CD4-positive, alpha-beta memory T cell (primary cell): ENCODE measurements at regions of chr17 and their contacts with region 1.

Region 1: DNA sequence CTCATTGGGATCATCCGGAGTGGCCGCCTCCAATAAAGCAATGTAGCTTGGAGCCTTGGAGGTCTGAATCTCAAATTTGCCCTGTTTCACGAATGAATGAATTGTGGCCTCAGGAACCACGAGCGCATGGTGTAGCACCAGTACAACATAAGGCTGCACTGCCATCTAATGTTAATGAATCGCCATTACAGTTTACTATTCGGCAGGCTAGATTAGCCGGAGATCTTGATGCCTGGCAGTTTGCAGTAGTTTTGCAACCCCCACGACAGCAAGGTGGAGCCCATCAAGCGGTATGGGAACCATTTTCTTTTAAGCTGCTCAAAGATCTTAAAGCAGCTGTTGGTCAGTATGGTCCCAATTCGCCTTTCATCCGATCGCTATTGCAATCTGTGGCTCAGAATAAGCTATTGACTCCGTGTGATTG is 18.8 kb downstream of the ALOX15B start:
- DNase-seq: peak; percentile 63 to 74 (median 69)
- H3K4me3 ChIP-seq: no peak overlapping the region
- H3K4me3 Mint-ChIP-seq: no peak overlapping the region
- H3K27ac ChIP-seq: no peak overlapping the region
- H3K27ac Mint-ChIP-seq: no peak overlapping the region
- H3K4me1 ChIP-seq: peaks cover 7% of the 10 kb centered on the region
- H3K4me1 Mint-ChIP-seq: peaks cover 1 to 16% (median 3%) of the 10 kb centered on the region in 4 donors
- H3K27me3 ChIP-seq: peaks cover 27% of the 10 kb centered on the region
- H3K27me3 Mint-ChIP-seq: peaks cover 31 to 32% of the 10 kb centered on the region in 2 donors

Region 2: GRCh38 chr17:7818746-7819645 is 238.7 kb before region 1 on chr17:
- CTCF ChIA-PET with region 1: interaction called, 4 read pairs
- POLR2A ChIA-PET with region 1: no interaction called
- intact Hi-C with region 1: loop called (anchors 1 kb)
- DNase-seq: no peak
- H3K4me3 ChIP-seq: no peak overlapping the region
- H3K4me3 Mint-ChIP-seq: no peak overlapping the region
- H3K27ac ChIP-seq: no peak overlapping the region
- H3K27ac Mint-ChIP-seq: no peak overlapping the region
- H3K4me1 ChIP-seq: no peaks in the 10 kb centered on the region
- H3K4me1 Mint-ChIP-seq: no peaks in the 10 kb centered on the region
- H3K27me3 ChIP-seq: no peaks in the 10 kb centered on the region
- H3K27me3 Mint-ChIP-seq: no peaks in the 10 kb centered on the region

Region 3: DNA sequence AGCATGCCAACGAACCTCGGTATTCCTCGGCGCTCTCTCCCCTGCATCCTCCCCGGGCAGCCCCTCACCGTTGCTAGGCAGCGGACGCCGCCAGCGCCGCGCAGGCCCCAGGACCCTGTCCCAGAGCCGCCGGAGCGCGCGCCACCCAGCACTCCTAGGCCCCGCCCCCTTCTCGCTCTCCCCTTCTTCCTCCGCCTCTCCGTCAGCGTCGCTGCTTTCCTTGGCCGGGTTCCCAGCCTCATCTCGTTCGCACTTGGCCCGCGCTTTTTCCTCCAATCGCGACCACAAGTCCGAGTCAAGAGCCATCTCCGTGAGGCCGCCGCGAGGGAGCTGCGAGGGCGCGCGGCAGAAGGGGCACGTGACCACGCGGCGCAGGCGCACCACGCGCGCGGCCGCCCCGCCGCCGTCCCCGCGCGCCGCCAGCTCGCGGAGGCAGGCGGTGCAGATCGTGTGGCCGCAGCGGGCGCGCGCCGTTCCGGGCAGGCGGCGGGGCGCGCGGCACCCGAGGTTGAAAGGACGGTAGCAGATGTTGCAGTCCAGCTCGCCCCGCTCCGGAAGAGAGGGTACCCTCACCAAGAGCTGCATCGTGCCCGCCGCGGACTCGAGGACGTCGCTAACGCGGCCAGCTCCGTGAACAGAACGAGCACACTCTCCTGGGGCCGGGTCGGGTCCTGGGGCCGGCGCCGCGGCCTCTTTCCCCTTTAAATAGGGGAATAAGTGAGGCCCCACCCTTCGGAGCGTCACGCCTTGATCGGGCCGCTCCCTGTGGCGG is 141.9 kb before region 1 on chr17 and contains the start of gene RNF227:
- CTCF ChIA-PET with region 1: interaction called, 14 read pairs
- POLR2A ChIA-PET with region 1: interaction called, 3 read pairs
- intact Hi-C with region 1: loop called (anchors 1 kb)
- DNase-seq: peak; percentile 84 to 88 (median 84)
- H3K4me3 ChIP-seq: peak within 1 kb of the TSS; percentile 33 to 71
- H3K4me3 Mint-ChIP-seq: peak within 1 kb of the TSS; percentile 88 to 95 (median 90)
- H3K27ac ChIP-seq: peak within 1 kb of the TSS; percentile 67
- H3K27ac Mint-ChIP-seq: peak within 1 kb of the TSS; percentile 91 to 95 (median 93)
- H3K4me1 ChIP-seq: peaks cover 26% of the 10 kb centered on the region
- H3K4me1 Mint-ChIP-seq: peaks cover 19 to 34% (median 24%) of the 10 kb centered on the region in 4 donors
- H3K27me3 ChIP-seq: no peaks in the 10 kb centered on the region
- H3K27me3 Mint-ChIP-seq: no peaks in the 10 kb centered on the region
- total RNA-seq, gene RNF227: 6.7 to 7.4 TPM

Region 4: DNA sequence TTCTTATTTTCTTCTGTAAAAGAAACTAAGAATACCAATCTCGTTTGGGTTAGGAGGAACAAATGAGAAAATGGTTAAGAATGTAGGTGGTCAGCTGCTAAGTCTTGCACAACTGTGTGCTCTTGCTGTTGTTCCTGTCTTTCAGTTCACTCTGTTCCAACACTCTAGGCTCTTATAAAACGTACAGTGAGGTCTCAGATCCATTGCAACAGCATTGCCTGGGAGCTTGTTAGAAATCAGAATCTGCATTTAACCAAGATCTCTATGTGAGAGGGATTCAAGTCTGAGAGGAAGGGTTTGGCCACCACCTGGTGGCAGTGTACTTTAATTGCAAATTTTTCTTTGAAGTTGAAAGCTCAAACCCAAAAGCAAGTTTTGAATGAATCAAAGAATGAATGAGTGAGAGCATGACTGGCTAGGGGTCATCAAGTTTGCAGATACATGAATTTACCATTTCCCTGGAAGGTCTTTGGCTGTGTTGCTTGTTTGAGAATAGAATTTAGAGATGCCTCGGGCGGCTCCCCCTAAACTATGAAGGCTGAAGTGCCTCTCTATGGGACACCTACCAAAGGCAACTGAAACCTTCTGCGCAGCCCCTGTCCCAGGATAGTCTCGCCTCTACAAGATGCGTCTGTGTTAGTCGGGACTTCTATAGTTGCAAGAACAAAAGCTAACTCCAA is 16.3 kb before region 1 on chr17:
- CTCF ChIA-PET with region 1: interaction called, 17 read pairs
- POLR2A ChIA-PET with region 1: no interaction called
- intact Hi-C with region 1: loop called (anchors 1 kb)
- DNase-seq: peak; percentile 29 to 49 (median 35)
- H3K4me3 ChIP-seq: no peak overlapping the region
- H3K4me3 Mint-ChIP-seq: no peak overlapping the region
- H3K27ac ChIP-seq: no peak overlapping the region
- H3K27ac Mint-ChIP-seq: no peak overlapping the region
- H3K4me1 ChIP-seq: no peaks in the 10 kb centered on the region
- H3K4me1 Mint-ChIP-seq: peaks cover 0 to 4% (median 0%) of the 10 kb centered on the region in 4 donors
- H3K27me3 ChIP-seq: no peaks in the 10 kb centered on the region
- H3K27me3 Mint-ChIP-seq: peaks cover 15 to 16% of the 10 kb centered on the region in 2 donors

Region 5: GRCh38 chr17:8079291-8080207 is 21.8 kb after region 1 on chr17:
- CTCF ChIA-PET with region 1: interaction called, 147 read pairs
- POLR2A ChIA-PET with region 1: no interaction called
- intact Hi-C with region 1: loop called (anchors 1 kb)
- DNase-seq: peak; percentile 76 to 84 (median 77)
- H3K4me3 ChIP-seq: peak overlapping the region in 1 of 2 donors; percentile 70
- H3K4me3 Mint-ChIP-seq: peak overlapping the region; percentile 86 to 93 (median 89)
- H3K27ac ChIP-seq: peak overlapping the region; percentile 63
- H3K27ac Mint-ChIP-seq: peak overlapping the region; percentile 46 to 95 (median 86)
- H3K4me1 ChIP-seq: peaks cover 14% of the 10 kb centered on the region
- H3K4me1 Mint-ChIP-seq: peaks cover 7 to 16% (median 12%) of the 10 kb centered on the region in 4 donors
- H3K27me3 ChIP-seq: peaks cover 3% of the 10 kb centered on the region
- H3K27me3 Mint-ChIP-seq: peaks cover 0 to 6% of the 10 kb centered on the region in 2 donors

Region 6: DNA sequence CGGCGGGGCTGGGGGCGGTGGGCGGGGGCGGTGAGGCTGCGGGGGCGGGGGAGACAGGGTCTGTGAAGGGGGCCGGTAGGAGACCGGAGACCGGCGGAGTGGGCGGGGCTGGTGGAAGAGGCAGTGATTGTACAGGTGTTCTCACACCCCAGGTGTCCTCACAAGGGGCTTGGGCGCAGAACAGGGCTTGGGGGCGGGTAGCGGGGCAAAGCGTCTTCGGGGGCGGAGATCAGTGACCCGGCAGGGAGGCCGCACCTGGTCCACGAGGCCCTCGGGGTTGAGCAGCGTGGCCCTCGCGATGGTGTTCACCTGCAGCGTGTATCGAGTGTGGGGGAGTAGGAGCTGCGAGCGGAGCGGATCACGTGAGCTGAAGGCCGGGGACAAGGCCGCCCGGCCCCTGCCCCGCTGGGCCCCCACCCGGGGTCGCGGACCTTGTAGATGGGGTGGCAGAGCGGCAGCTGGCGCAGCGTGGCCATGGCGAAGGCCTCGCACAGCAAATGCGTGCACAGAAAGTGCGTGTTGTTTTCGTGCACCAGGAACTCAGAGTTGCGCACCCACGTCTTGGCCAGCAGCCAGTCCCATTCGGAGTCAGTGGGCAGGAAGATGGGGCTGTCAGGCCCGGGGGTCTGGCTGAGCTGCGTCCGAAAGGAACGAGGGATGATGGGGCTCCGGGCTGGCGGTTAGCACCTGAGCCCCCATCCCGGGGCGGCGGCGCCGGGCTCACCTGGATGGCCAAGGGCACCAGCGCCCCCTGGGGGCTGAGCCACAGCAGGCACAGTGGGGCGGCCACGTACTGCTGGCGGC is 52.2 kb after region 1 on chr17:
- CTCF ChIA-PET with region 1: interaction called, 83 read pairs
- POLR2A ChIA-PET with region 1: interaction called, 3 read pairs
- intact Hi-C with region 1: loop called (anchors 1 kb)
- DNase-seq: peak; percentile 78 to 86 (median 82)
- H3K4me3 ChIP-seq: peak overlapping the region; percentile 66 to 84
- H3K4me3 Mint-ChIP-seq: peak overlapping the region; percentile 42 to 78 (median 72)
- H3K27ac ChIP-seq: no peak overlapping the region
- H3K27ac Mint-ChIP-seq: no peak overlapping the region
- H3K4me1 ChIP-seq: peaks cover 5% of the 10 kb centered on the region
- H3K4me1 Mint-ChIP-seq: peaks cover 0 to 5% (median 2%) of the 10 kb centered on the region in 4 donors
- H3K27me3 ChIP-seq: peaks cover 26% of the 10 kb centered on the region
- H3K27me3 Mint-ChIP-seq: peaks cover 15 to 22% of the 10 kb centered on the region in 2 donors

Region 7: DNA sequence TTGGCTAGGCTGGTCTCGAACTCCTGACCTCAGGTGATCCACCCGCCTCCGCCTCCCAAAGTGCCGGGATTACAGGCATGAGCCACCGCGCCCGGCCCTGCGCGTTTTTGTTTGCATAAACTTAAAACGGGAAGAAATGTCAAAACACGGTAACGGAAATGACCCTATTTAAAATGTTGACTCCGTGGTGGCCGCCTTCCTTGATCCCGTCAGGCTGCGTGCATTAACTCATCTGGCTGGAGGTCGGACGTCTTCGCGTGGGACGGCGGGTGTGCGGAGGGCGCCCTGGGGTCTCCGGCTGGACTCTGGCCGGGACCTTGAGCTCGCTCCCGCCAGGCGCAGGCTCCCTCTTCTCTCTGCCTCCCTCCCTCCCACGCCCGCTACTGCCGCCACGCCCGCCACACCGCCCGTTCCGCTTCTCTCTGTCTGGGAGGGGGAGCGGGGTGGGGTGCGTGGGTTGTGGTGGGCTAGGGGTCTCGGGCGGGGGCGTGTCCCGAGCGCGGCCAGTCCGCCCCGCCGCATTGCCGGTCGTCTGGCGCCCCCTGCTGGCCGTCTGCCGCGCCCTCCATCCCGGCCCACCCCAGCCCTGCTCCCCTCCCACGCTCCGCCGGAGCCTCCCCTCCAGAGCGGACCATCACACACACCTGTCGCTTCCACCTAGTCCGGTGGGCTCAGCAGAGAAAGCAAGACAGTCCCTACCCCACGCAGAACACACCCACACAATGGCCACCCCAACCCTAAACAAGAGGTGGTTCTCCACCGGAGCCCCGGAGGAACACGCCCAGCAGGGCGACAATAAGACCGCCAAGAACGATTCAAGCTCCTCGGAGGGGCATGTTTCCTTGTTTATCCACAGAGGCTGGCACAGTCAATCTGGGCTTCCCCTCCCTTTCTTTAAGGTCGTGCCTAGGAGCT is 688.1 kb after region 1 on chr17:
- CTCF ChIA-PET with region 1: interaction called, 14 read pairs
- POLR2A ChIA-PET with region 1: no interaction called
- intact Hi-C with region 1: loop called (anchors 5 kb)
- DNase-seq: peak; percentile 66 to 78 (median 70)
- H3K4me3 ChIP-seq: peak overlapping the region; percentile 34 to 72
- H3K4me3 Mint-ChIP-seq: peak overlapping the region; percentile 89 to 95 (median 91)
- H3K27ac ChIP-seq: peak overlapping the region; percentile 56
- H3K27ac Mint-ChIP-seq: peak overlapping the region; percentile 87 to 95 (median 91)
- H3K4me1 ChIP-seq: peaks cover 17% of the 10 kb centered on the region
- H3K4me1 Mint-ChIP-seq: peaks cover 9 to 23% (median 12%) of the 10 kb centered on the region in 4 donors
- H3K27me3 ChIP-seq: no peaks in the 10 kb centered on the region
- H3K27me3 Mint-ChIP-seq: no peaks in the 10 kb centered on the region